Ovary (tissue), 10 donors: ENCODE measurements at regions of chr19 and their contacts with region 1.

Region 1: GRCh38 chr19:56350416-56351045 is 35.9 kb upstream of the ZSCAN5A start:
- DNase-seq: peak in 3 of 5 donors; percentile 21 to 67 (median 43)
- H3K4me3 ChIP-seq: no peak overlapping the region
- H3K27ac ChIP-seq: no peak overlapping the region
- H3K4me1 ChIP-seq: no peaks in the 10 kb centered on the region
- H3K27me3 ChIP-seq: no peaks in the 10 kb centered on the region
- CTCF ChIP-seq: peak; percentile 34 to 79 (median 78)
- EP300 ChIP-seq: no peak
- POLR2A ChIP-seq: no peak

Region 2: DNA sequence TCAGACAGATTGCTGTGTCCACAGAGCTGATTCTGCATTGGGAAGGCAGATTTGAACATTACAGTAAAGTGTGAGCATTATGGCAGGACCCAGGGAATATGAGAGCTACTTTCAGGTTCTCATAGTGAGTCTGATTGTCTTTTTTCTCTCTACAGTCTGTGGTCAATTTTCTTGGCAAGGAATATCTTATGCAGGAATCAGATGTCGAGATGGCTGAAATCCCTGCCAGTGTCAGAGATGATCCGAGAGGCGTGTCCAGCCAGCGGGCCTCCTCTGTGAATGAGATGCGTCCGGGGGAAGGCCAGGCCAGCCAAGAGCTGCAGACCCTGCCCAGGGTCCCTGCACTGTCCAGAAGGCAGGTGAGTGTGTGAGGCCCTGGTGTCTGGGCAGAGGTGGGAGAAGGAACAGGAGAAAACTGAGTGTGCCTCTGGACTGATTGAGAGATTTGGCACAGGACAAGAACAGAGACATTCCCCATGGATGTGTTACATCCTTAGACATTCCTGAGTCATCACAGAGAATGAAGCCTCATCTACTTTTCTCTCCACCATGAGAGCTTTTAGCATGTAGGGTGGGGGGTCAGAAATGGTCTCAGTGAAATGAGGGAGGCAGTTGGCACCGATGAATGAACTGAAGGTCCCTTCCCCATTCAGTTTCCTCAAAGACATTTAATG is 105.3 kb before region 1 on chr19:
- intact Hi-C with region 1: loop called in 3 of 4 experiments (anchors 5 to 10 kb)
- DNase-seq: no peak
- H3K4me3 ChIP-seq: no peak overlapping the region
- H3K27ac ChIP-seq: no peak overlapping the region
- H3K4me1 ChIP-seq: no peaks in the 10 kb centered on the region
- H3K27me3 ChIP-seq: no peaks in the 10 kb centered on the region
- CTCF ChIP-seq: no peak
- EP300 ChIP-seq: no peak
- POLR2A ChIP-seq: no peak

Region 3: GRCh38 chr19:56252699-56253422 is 97.7 kb before region 1 on chr19:
- intact Hi-C with region 1: loop called in 3 of 4 experiments (anchors 5 to 10 kb)
- DNase-seq: peak; percentile 31 to 70 (median 55)
- H3K4me3 ChIP-seq: no peak overlapping the region
- H3K27ac ChIP-seq: no peak overlapping the region
- H3K4me1 ChIP-seq: no peaks in the 10 kb centered on the region
- H3K27me3 ChIP-seq: no peaks in the 10 kb centered on the region
- CTCF ChIP-seq: peak; percentile 18 to 35 (median 20)
- EP300 ChIP-seq: no peak
- POLR2A ChIP-seq: no peak